ENCODE measurements at regions of chr21 and their contacts with region 1.

Region 1: DNA sequence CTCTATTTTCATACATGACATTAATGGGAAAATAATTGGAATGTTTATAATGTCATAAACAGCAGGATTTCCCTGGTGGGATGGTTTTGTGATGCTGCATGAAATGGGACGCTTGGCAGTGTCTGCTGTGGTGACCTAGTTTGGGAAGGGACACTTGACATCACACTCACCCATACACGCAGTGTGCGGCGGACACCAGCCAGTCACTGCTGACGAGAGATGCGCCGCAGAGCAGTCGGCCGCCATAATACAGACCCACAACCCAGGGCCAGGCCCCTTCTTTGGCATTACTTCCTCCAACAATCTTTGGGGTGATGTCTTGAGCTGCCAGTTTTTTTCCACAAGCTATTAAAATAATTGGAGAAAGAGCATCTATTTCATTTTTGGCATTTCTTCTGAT is 49.5 kb downstream of the CHODL start:
- DNase-seq: no peak
- H3K4me3 ChIP-seq: no peak overlapping the region
- H3K27ac ChIP-seq: no peak overlapping the region
- H3K4me1 ChIP-seq: no peaks in the 10 kb centered on the region
- H3K27me3 ChIP-seq: no peaks in the 10 kb centered on the region
- CTCF ChIP-seq: no peak

Region 2: DNA sequence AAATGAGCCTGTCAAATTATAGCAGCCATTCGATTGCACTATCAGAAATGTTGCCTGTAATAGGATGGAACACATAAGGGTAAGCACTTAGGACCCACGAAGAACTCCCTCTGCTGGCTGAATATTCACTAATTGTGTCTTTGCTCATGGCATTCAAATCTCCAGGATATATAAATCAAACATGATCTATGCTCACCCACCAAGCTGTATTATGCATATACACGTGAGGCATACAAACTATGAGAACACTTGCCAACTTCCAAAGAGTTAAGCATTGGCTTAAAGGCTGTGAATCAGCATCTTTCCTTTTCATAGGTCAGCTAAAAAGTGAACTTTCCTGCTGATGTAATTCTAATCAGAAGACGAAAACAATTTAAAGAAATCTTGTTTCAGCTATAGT is 75.0 kb after region 1 on chr21:
- CTCF ChIA-PET with region 1: no interaction called
- POLR2A ChIA-PET with region 1: no interaction called
- intact Hi-C with region 1: loop called (anchors 5 kb)
- DNase-seq: no peak
- H3K4me3 ChIP-seq: no peak overlapping the region
- H3K27ac ChIP-seq: no peak overlapping the region
- H3K4me1 ChIP-seq: no peaks in the 10 kb centered on the region
- H3K27me3 ChIP-seq: no peaks in the 10 kb centered on the region
- CTCF ChIP-seq: 0 out of 2 replicates have a peak, but pooled peaks have one; percentile 28

Measured in PC-9 (cell line).